ENCODE measurements at regions of chr20 and their contacts with region 1.

Region 1: DNA sequence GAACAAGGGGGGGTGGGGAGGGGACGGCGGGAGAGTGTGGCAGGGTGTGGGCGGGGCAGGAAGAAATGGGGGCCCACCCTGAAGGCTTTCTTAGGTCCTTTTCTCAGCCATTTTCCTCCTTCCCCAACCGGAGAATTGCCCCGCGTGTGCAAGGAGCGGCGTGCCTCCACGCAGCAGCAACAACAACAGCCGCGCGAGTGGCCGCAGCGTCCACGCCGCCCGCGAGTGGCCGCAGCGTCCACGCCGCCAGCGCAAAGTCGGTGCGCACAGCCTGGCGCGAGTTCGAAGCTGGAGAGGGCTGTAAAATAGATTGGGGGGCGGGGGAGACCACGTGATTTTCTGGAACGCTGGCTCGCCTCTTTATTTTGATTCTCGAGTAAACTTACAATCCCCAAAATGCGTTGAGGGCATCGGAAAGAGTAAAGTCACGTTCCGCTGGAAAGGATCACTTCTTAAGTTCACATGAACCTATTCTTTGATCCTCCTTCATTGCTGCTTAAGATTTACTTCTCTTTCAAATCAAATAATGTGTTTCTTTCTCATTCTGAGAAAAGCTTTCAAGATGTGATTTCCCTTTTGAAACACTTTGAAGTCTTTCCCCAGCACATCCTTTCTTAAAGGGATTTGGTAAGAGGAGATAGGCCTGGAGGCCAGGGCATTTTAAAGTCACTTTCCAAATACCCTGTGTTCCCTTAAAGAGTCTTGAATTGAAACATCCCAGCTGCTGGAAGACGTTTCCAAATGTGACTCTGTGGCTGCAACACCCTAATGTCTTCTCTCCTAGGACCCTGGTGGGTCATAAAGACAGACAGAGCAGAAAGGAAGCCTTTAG is 66.7 kb upstream of the ZNF217 start:
- DNase-seq: no peak
- H3K4me3 Mint-ChIP-seq: peak overlapping the region; percentile 64
- H3K27ac Mint-ChIP-seq: no peak overlapping the region
- H3K4me1 Mint-ChIP-seq: peaks cover 34% of the 10 kb centered on the region
- H3K27me3 Mint-ChIP-seq: no peaks in the 10 kb centered on the region
- CTCF ChIP-seq: no peak

Region 2: DNA sequence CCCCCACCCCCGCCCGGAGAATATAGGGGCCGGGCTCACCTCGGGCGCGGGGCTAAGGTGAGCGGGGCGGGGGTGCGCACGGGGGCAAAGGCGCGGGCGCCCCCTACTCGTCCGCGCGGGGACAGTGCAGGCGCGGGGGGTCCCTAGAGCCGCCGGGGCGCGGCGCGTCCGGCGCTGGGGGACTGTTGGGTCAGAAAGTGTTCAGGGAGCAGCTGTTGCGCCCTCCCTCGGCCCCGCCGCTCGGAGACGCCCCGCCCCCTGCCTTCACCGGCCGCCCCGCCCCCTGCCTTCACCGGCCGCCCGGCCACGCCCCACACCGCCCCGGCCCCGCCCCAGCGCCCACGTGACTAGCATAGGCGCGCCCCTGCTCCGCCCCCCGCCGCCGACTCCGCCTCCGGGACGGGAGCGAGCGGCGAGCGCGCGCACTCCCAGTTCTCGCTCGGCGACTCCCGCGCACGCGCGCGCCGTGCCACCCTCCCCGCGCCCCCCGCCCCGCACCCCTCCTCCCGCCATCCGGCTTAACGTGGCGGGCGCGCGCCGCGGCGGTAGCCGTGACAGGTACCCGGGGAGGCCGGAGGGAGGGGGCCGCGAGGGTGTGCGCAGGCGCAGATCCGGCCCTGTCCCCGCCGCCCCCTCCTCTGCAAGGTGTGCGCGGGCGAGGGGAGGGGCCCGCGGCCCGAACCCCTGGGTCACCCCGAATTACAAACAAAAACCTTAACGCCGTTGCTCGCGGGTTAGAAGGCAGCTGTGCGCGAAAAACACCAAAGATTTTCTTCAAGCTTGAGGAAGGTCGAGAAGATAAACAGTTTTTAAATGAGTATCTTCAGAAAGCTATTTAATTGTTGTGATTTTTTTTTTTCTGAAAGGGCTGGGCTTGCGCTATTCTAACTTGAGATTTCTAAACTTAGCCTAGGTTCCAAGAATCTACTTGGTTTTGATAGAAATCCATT is 66.0 kb before region 1 on chr20:
- CTCF ChIA-PET with region 1: interaction called, 3 read pairs
- intact Hi-C with region 1: loop called (anchors 2 kb)
- DNase-seq: peak; percentile 100
- H3K4me3 Mint-ChIP-seq: peak overlapping the region; percentile 69
- H3K27ac Mint-ChIP-seq: peak overlapping the region; percentile 86
- H3K4me1 Mint-ChIP-seq: peaks cover 65% of the 10 kb centered on the region
- H3K27me3 Mint-ChIP-seq: no peaks in the 10 kb centered on the region
- CTCF ChIP-seq: peak; percentile 53

Region 3: GRCh38 chr20:53623454-53624211 is 36.7 kb before region 1 on chr20:
- CTCF ChIA-PET with region 1: interaction called, 3 read pairs
- intact Hi-C with region 1: loop called (anchors 5 kb)
- DNase-seq: peak; percentile 71
- H3K4me3 Mint-ChIP-seq: peak overlapping the region; percentile 67
- H3K27ac Mint-ChIP-seq: peak overlapping the region; percentile 99
- H3K4me1 Mint-ChIP-seq: peaks cover 40% of the 10 kb centered on the region
- H3K27me3 Mint-ChIP-seq: no peaks in the 10 kb centered on the region
- CTCF ChIP-seq: no peak

Region 4: GRCh38 chr20:53677447-53678314 is 17.4 kb after region 1 on chr20:
- CTCF ChIA-PET with region 1: interaction called, 3 read pairs
- intact Hi-C with region 1: loop called (anchors 2 kb)
- DNase-seq: peak; percentile 76
- H3K4me3 Mint-ChIP-seq: peak overlapping the region; percentile 51
- H3K27ac Mint-ChIP-seq: peak overlapping the region; percentile 76
- H3K4me1 Mint-ChIP-seq: peaks cover 45% of the 10 kb centered on the region
- H3K27me3 Mint-ChIP-seq: no peaks in the 10 kb centered on the region
- CTCF ChIP-seq: peak; percentile 40

Region 5: DNA sequence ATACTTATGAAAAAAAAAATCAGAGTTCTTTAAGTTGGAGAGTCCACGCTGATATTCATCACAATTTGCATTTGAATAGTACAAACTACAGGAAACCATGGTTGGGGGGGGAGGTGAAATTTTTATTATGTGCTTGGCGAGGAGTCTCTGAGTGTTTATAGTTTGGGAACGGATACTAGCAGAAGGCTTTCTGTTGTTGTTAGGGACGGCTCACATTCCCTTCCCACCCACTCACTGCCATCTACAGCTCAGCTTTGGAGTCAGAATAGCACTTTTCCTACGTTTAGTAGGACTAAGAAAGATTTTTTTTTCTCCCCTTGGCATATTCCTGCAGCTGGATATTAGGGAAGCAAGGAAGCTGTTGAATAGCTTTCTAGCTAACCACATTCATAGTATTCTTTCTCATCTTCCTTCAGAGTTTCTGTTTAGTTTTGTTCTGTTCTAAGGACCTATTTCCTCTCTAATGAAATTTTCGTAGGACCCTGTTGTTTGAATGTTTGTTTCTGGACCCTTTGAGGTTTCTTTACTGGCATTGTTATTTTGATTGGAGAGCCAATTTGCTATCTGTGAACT is 168.5 kb after region 1 on chr20:
- CTCF ChIA-PET with region 1: no interaction called
- intact Hi-C with region 1: loop called (anchors 2 kb)
- DNase-seq: peak; percentile 27
- H3K4me3 Mint-ChIP-seq: peak overlapping the region; percentile 64
- H3K27ac Mint-ChIP-seq: peak overlapping the region; percentile 98
- H3K4me1 Mint-ChIP-seq: peaks cover 55% of the 10 kb centered on the region
- H3K27me3 Mint-ChIP-seq: no peaks in the 10 kb centered on the region
- CTCF ChIP-seq: no peak